K562 (cell line): ENCODE measurements at regions of chr4 and their contacts with region 1.

Region 1: GRCh38 chr4:174318829-174319764 is 35.4 kb downstream of the CEP44 start:
- DNase-seq: peak; percentile 25 to 54 (median 30)
- ATAC-seq: 0 out of 3 replicates have a peak, but pooled peaks have one; percentile 27
- H3K4me3 ChIP-seq: no peak overlapping the region
- H3K27ac ChIP-seq: no peak overlapping the region; the same call in 2 of the 3 replicates
- H3K4me1 ChIP-seq: peaks cover 0 to 13% of the 10 kb centered on the region in 2 experiments; a peak in 2 of 5 replicates
- H3K27me3 ChIP-seq: no peaks in the 10 kb centered on the region
- CTCF ChIP-seq: peak in 2 of 3 experiments; percentile 46 to 78; a peak in 4 of 6 replicates
- EP300 ChIP-seq: no peak
- POLR2A ChIP-seq: no peak
- RAD21 ChIP-seq: peak; percentile 63 to 75

Region 2: DNA sequence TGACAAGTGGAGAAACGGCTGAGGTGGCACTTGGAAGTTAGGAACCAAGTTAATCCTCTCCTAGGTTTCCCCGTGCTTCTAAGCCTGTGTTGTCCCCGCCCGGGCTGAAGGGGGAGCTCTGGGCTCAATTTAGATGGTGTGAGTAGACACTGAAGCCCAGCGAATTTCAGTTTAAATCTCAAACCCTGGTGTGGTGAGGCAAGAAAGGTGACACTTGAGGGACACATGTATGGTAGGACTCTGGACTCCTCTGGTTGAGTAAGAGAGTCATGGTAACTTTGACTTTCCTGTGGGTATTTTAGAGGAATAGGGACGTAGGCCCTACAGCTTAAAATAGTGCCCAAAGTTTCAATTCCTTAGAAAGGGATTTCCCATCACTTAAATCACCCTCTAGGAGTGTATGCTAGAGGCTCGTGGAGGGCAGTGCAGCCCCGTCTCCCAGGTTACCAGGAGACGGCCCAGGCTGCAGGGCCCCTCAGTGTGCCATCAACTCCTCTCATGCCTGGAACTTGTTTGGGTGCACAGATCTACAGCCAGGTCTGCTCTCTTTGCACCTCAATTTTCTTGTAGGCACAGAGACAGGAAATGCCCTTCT is 813.1 kb before region 1 on chr4:
- CTCF ChIA-PET with region 1: no interaction called
- POLR2A ChIA-PET with region 1: no interaction called
- in situ Hi-C with region 1: no loop called
- intact Hi-C with region 1: loop called (anchors 1 kb)
- DNase-seq: peak; percentile 44 to 78 (median 58)
- ATAC-seq: peak; percentile 98
- H3K4me3 ChIP-seq: no peak overlapping the region
- H3K27ac ChIP-seq: no peak overlapping the region
- H3K4me1 ChIP-seq: peaks cover 0 to 11% of the 10 kb centered on the region in 2 experiments; a peak in 2 of 5 replicates
- H3K27me3 ChIP-seq: no peaks in the 10 kb centered on the region; a peak in 1 of 5 replicates
- CTCF ChIP-seq: peak; percentile 77 to 83 (median 82)
- EP300 ChIP-seq: no peak
- POLR2A ChIP-seq: no peak
- RAD21 ChIP-seq: peak; percentile 70 to 79

Region 3: DNA sequence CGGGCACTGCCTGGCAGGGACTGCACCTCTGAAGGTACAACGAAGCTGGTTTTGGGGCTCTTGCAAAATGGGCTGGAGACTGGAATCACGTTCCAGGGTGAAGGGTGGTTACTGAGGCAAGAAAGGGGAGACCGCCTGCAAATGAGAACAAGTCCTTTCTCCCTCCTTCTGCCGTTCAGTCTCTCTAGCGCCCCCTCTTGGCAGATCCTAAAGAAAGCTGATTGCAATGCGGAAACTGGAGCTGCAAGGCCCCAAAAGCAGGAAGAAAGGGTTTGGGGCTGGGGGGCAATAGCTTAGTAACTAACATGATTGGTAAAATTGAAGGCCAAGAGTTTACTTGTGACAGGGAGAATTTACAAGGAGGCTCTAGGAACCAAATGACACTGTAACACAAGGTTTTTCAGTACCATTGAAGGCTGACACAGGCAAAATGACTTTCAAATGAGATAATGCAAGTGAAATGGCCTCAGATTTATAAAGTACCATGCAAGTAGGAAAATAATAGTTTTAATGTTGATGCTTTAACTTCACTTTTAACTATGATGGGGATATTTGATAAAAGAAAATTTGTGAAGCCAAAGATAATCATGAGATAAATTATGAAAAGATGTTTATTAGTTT is 566.4 kb before region 1 on chr4:
- CTCF ChIA-PET with region 1: no interaction called
- POLR2A ChIA-PET with region 1: no interaction called
- in situ Hi-C with region 1: no loop called
- intact Hi-C with region 1: loop called (anchors 5 kb)
- DNase-seq: peak; percentile 40 to 74 (median 57)
- ATAC-seq: peak; percentile 84
- H3K4me3 ChIP-seq: no peak overlapping the region
- H3K27ac ChIP-seq: no peak overlapping the region
- H3K4me1 ChIP-seq: no peaks in the 10 kb centered on the region
- H3K27me3 ChIP-seq: no peaks in the 10 kb centered on the region
- CTCF ChIP-seq: peak; percentile 66 to 78 (median 72)
- EP300 ChIP-seq: no peak
- POLR2A ChIP-seq: no peak
- RAD21 ChIP-seq: peak in 1 of 2 experiments; percentile 44; a peak in 2 of 4 replicates

Region 4: GRCh38 chr4:173990126-173990868 is 328.8 kb before region 1 on chr4:
- CTCF ChIA-PET with region 1: no interaction called
- POLR2A ChIA-PET with region 1: no interaction called
- in situ Hi-C with region 1: no loop called
- intact Hi-C with region 1: loop called (anchors 5 kb)
- DNase-seq: peak in 2 of 4 experiments; percentile 15 to 41
- ATAC-seq: peak; percentile 88
- H3K4me3 ChIP-seq: no peak overlapping the region
- H3K27ac ChIP-seq: no peak overlapping the region
- H3K4me1 ChIP-seq: peaks cover 0 to 3% of the 10 kb centered on the region in 2 experiments; a peak in 2 of 5 replicates
- H3K27me3 ChIP-seq: no peaks in the 10 kb centered on the region
- CTCF ChIP-seq: peak; percentile 38 to 54 (median 50); a peak in 5 of 6 replicates
- EP300 ChIP-seq: no peak
- POLR2A ChIP-seq: no peak
- RAD21 ChIP-seq: peak; percentile 43 to 44; a peak in 3 of 4 replicates

Region 5: DNA sequence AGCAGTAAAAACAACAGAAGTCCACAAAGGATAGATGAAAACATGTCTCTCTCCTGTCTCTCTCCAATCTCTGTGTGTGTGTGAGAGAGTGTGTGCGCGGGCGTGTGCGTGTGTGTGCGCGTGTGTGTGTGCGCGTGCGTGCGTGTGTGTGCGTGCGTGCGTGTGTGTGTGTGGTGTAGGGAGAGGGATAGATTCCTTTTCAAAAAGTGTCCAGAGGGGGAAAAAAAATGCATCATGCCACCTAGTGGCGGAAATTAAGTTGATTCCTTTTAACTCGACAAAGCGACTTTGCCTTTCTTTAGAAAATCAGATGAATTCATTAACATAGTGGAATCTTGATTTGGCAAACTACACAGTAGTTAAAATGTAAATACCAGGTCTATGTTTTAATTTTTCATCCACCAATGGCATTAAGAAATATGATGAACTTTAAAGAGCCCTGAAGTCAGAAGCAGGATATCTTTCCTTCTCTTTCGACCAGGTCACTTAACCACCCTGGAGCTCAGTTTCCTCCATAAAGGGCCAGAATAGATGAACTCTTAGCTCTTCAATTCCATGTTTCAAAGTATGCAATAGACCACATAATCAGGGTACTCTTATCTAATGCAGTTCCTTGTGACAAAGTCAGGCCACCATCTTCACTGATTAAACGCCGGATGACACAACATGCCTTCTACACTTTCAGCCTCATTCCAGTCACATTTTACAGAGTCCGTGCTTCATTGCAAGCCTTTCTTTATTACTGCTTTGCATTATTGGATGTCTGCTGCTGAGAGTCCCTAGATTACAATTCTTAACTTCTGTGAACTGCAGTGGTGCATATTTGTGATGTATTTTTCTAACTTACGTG is 198.4 kb before region 1 on chr4:
- CTCF ChIA-PET with region 1: no interaction called
- POLR2A ChIA-PET with region 1: no interaction called
- in situ Hi-C with region 1: no loop called
- intact Hi-C with region 1: loop called (anchors 5 kb)
- DNase-seq: peak; percentile 47 to 78 (median 54)
- ATAC-seq: peak; percentile 90
- H3K4me3 ChIP-seq: peak overlapping the region; percentile 34
- H3K27ac ChIP-seq: no peak overlapping the region
- H3K4me1 ChIP-seq: peaks cover 0 to 3% of the 10 kb centered on the region in 2 experiments; a peak in 1 of 5 replicates
- H3K27me3 ChIP-seq: no peaks in the 10 kb centered on the region
- CTCF ChIP-seq: peak; percentile 64 to 75 (median 66)
- EP300 ChIP-seq: no peak
- POLR2A ChIP-seq: no peak
- RAD21 ChIP-seq: peak; percentile 49 to 61

Region 6: GRCh38 chr4:174156239-174156826 is 162.8 kb before region 1 on chr4:
- CTCF ChIA-PET with region 1: no interaction called
- POLR2A ChIA-PET with region 1: no interaction called
- in situ Hi-C with region 1: no loop called
- intact Hi-C with region 1: loop called (anchors 2 kb)
- DNase-seq: peak; percentile 39 to 80 (median 48)
- ATAC-seq: peak; percentile 88
- H3K4me3 ChIP-seq: no peak overlapping the region
- H3K27ac ChIP-seq: peak overlapping the region; percentile 59; the same call in 2 of the 3 replicates
- H3K4me1 ChIP-seq: peaks cover 5 to 15% of the 10 kb centered on the region in 2 experiments
- H3K27me3 ChIP-seq: no peaks in the 10 kb centered on the region
- CTCF ChIP-seq: peak; percentile 56 to 84 (median 59)
- EP300 ChIP-seq: no peak
- POLR2A ChIP-seq: no peak
- RAD21 ChIP-seq: peak; percentile 68 to 72

Region 7: GRCh38 chr4:174210354-174210753 is 108.7 kb before region 1 on chr4:
- CTCF ChIA-PET with region 1: no interaction called
- POLR2A ChIA-PET with region 1: no interaction called
- in situ Hi-C with region 1: no loop called
- intact Hi-C with region 1: no loop called
- DNase-seq: peak in 1 of 4 experiments; percentile 22
- ATAC-seq: peak; percentile 84
- H3K4me3 ChIP-seq: no peak overlapping the region
- H3K27ac ChIP-seq: no peak overlapping the region
- H3K4me1 ChIP-seq: no peaks in the 10 kb centered on the region
- H3K27me3 ChIP-seq: no peaks in the 10 kb centered on the region
- CTCF ChIP-seq: peak in 1 of 3 experiments; percentile 28; a peak in 1 of 6 replicates
- EP300 ChIP-seq: no peak
- POLR2A ChIP-seq: no peak
- RAD21 ChIP-seq: no peak

Region 8: GRCh38 chr4:174222266-174222872 is 96.7 kb before region 1 on chr4:
- CTCF ChIA-PET with region 1: interaction called, 6 read pairs
- POLR2A ChIA-PET with region 1: no interaction called
- in situ Hi-C with region 1: no loop called
- intact Hi-C with region 1: loop called (anchors 1 kb)
- DNase-seq: peak in 3 of 4 experiments; percentile 16 to 60 (median 37)
- ATAC-seq: peak; percentile 90
- H3K4me3 ChIP-seq: no peak overlapping the region
- H3K27ac ChIP-seq: no peak overlapping the region
- H3K4me1 ChIP-seq: peaks cover 0 to 3% of the 10 kb centered on the region in 2 experiments; a peak in 2 of 5 replicates
- H3K27me3 ChIP-seq: no peaks in the 10 kb centered on the region
- CTCF ChIP-seq: peak; percentile 59 to 65 (median 63)
- EP300 ChIP-seq: no peak
- POLR2A ChIP-seq: no peak
- RAD21 ChIP-seq: peak; percentile 50 to 56

Region 9: GRCh38 chr4:174856926-174857800 is 538.1 kb after region 1 on chr4:
- CTCF ChIA-PET with region 1: no interaction called
- POLR2A ChIA-PET with region 1: no interaction called
- in situ Hi-C with region 1: no loop called
- intact Hi-C with region 1: no loop called
- DNase-seq: no peak
- ATAC-seq: no peak
- H3K4me3 ChIP-seq: no peak overlapping the region
- H3K27ac ChIP-seq: no peak overlapping the region
- H3K4me1 ChIP-seq: no peaks in the 10 kb centered on the region
- H3K27me3 ChIP-seq: no peaks in the 10 kb centered on the region
- CTCF ChIP-seq: no peak
- EP300 ChIP-seq: no peak
- POLR2A ChIP-seq: no peak
- RAD21 ChIP-seq: no peak

Region 10: DNA sequence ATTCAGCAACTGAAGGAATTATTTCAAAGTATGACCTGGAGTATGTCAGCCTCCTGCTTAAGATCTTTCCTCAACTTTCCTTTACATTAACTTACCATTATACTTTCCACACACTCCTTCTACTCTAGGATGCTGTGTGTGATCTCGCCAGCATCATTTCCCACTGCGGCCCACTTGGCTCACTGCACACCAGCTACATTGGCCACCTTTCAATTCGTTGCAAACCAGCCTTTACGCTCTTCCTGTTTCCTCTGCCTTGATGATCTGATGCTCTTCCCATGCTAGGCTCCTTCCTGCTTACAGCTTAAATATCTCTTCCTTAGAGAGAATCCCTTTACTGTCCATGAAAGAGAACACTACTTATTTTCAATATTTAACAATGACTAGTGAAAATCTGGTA is 1397.9 kb after region 1 on chr4:
- CTCF ChIA-PET with region 1: no interaction called
- POLR2A ChIA-PET with region 1: no interaction called
- in situ Hi-C with region 1: no loop called
- intact Hi-C with region 1: no loop called
- DNase-seq: no peak
- ATAC-seq: no peak
- H3K4me3 ChIP-seq: no peak overlapping the region
- H3K27ac ChIP-seq: no peak overlapping the region
- H3K4me1 ChIP-seq: no peaks in the 10 kb centered on the region
- H3K27me3 ChIP-seq: no peaks in the 10 kb centered on the region
- CTCF ChIP-seq: no peak
- EP300 ChIP-seq: no peak
- POLR2A ChIP-seq: no peak
- RAD21 ChIP-seq: no peak